CD14-positive monocyte (primary cell): ENCODE measurements at regions of chr20 and their contacts with region 1.

Region 1: GRCh38 chr20:19995220-19995863 is 21.8 kb upstream of the NAA20 start:
- DNase-seq: peak in 2 of 3 donors; percentile 63 to 74
- H3K4me3 ChIP-seq: no peak overlapping the region
- H3K4me3 Mint-ChIP-seq: no peak overlapping the region
- H3K27ac ChIP-seq: peak overlapping the region in 1 of 2 donors; percentile 10
- H3K27ac Mint-ChIP-seq: peak overlapping the region in 6 of 7 donors; percentile 35 to 76 (median 72)
- H3K4me1 ChIP-seq: peaks cover 36 to 45% of the 10 kb centered on the region in 2 donors
- H3K4me1 Mint-ChIP-seq: peaks cover 43% of the 10 kb centered on the region
- H3K27me3 ChIP-seq: no peaks in the 10 kb centered on the region
- H3K27me3 Mint-ChIP-seq: peaks cover 0 to 2% (median 0%) of the 10 kb centered on the region in 3 donors
- CTCF ChIP-seq: peak; percentile 83

Region 2: GRCh38 chr20:19784511-19785172 is 210.7 kb before region 1 on chr20:
- intact Hi-C with region 1: loop called in 1 of 2 experiments (anchors 10 kb)
- DNase-seq: peak; percentile 55 to 74 (median 66)
- H3K4me3 ChIP-seq: peak overlapping the region in 2 of 3 experiments; percentile 29 to 53
- H3K4me3 Mint-ChIP-seq: peak overlapping the region; percentile 71 to 83
- H3K27ac ChIP-seq: no peak overlapping the region
- H3K27ac Mint-ChIP-seq: peak overlapping the region in 5 of 7 donors; percentile 30 to 81 (median 55)
- H3K4me1 ChIP-seq: peaks cover 25 to 27% of the 10 kb centered on the region in 2 donors
- H3K4me1 Mint-ChIP-seq: peaks cover 34% of the 10 kb centered on the region
- H3K27me3 ChIP-seq: no peaks in the 10 kb centered on the region
- H3K27me3 Mint-ChIP-seq: no peaks in the 10 kb centered on the region
- CTCF ChIP-seq: peak; percentile 81

Region 3: GRCh38 chr20:19903168-19903811 is 92.1 kb before region 1 on chr20:
- intact Hi-C with region 1: loop called (anchors 5 kb)
- DNase-seq: peak; percentile 86 to 92 (median 91)
- H3K4me3 ChIP-seq: peak overlapping the region in 1 of 3 experiments; percentile 51
- H3K4me3 Mint-ChIP-seq: peak overlapping the region; percentile 42 to 57
- H3K27ac ChIP-seq: peak overlapping the region; percentile 74 to 96
- H3K27ac Mint-ChIP-seq: peak overlapping the region; percentile 92 to 97 (median 96)
- H3K4me1 ChIP-seq: peaks cover 53 to 54% of the 10 kb centered on the region in 2 donors
- H3K4me1 Mint-ChIP-seq: peaks cover 52% of the 10 kb centered on the region
- H3K27me3 ChIP-seq: no peaks in the 10 kb centered on the region
- H3K27me3 Mint-ChIP-seq: peaks cover 0 to 2% (median 0%) of the 10 kb centered on the region in 3 donors
- CTCF ChIP-seq: peak; percentile 40